ENCODE measurements at regions of chr12 and their contacts with region 1.

Region 1: DNA sequence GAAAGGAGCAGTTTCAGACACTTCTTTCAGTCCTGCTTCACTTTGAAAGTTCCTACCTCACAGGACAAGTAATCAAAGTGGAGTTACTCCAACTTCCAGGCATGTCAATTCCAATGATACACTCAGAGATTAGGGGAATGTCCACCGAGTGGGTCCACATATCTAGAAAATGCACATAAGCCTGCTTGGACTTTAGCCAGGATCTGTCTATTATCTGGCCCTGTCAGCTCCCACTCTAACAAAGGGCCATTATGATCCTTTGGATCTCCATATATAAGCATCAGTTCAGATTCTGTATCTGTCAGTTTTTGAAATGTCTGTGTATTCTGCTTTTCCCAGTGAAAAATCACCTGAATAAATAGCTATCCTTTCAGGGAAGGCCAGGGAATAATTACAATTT is 112.9 kb upstream of the ATXN7L3B start:
- DNase-seq: no peak
- ATAC-seq: no peak
- H3K4me3 ChIP-seq: no peak overlapping the region
- H3K27ac ChIP-seq: no peak overlapping the region
- H3K4me1 ChIP-seq: no peaks in the 10 kb centered on the region
- H3K27me3 ChIP-seq: no peaks in the 10 kb centered on the region
- CTCF ChIP-seq: no peak

Region 2: DNA sequence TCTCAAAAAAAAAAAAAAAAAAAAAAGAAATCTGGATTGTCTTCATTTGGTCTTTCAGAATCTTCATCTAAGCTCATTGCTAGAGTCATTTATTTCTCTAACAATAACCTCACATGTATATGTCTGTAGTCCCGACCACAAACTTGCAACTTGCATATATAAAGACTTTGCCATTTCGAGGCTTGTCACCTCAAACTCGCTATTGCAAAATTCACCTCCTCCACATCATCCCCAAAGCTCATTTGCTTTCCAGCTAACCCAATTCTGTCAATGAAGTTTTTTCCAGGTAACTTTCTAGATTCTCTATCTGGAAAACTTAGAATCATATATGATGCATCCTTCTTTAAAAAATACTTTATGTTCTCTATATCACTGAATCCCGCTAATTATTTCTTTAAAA is 280.4 kb before region 1 on chr12:
- intact Hi-C with region 1: loop called in 1 of 10 experiments (anchors 10 kb)
- DNase-seq: no peak
- ATAC-seq: no peak
- H3K4me3 ChIP-seq: no peak overlapping the region
- H3K27ac ChIP-seq: no peak overlapping the region
- H3K4me1 ChIP-seq: no peaks in the 10 kb centered on the region
- H3K27me3 ChIP-seq: no peaks in the 10 kb centered on the region
- CTCF ChIP-seq: no peak

Region 3: GRCh38 chr12:74365178-74365964 is 59.4 kb before region 1 on chr12:
- intact Hi-C with region 1: no loop called
- DNase-seq: no peak
- ATAC-seq: no peak
- H3K4me3 ChIP-seq: no peak overlapping the region
- H3K27ac ChIP-seq: no peak overlapping the region
- H3K4me1 ChIP-seq: no peaks in the 10 kb centered on the region
- H3K27me3 ChIP-seq: no peaks in the 10 kb centered on the region
- CTCF ChIP-seq: peak in 2 of 9 donors; percentile 12 to 18

Region 4: GRCh38 chr12:74441872-74442271 is 17.1 kb after region 1 on chr12:
- intact Hi-C with region 1: no loop called
- DNase-seq: no peak
- ATAC-seq: no peak
- H3K4me3 ChIP-seq: no peak overlapping the region
- H3K27ac ChIP-seq: no peak overlapping the region
- H3K4me1 ChIP-seq: no peaks in the 10 kb centered on the region
- H3K27me3 ChIP-seq: no peaks in the 10 kb centered on the region
- CTCF ChIP-seq: no peak